IMR-90 (cell line): ENCODE measurements at regions of chr12 and their contacts with region 1.

Region 1: DNA sequence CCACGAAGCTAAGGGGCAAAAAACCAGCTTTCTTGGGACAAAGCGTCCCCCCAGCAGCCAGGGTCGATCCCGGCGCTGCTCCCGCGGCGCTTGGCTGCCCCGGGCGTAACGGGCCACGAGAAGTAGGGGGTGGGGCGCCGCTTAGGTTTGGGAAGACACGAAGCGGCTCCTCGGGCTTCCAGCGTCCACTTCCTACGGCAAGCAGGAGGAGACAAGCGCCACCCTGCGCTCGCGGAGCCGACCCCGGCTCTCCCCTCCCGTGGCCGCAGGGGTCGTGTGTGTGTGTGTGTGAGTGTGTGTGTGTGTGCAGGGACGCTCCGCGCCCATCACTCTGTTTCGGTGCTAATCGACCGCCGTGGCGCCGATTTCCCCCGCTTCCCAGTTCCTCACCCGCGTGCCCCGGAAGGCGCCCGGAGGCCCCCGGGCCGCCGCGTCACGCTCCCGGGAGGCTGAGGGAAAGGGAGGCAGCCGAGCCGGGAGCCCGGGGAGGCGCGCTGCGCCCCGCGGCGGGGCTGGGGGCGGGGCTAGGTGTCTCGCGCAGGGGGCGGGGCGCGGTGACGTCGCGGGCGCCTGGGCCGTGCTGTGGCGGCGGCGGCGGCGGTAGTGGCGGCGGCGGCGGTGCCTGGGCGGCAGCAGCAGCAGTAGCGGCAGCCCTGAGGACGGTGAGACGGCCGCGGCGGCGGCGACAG is at the start of gene ERC1:
- DNase-seq: peak; percentile 87
- ATAC-seq: peak; percentile 91
- H3K4me3 ChIP-seq: peak within 1 kb of the TSS; percentile 77
- H3K27ac ChIP-seq: peak within 1 kb of the TSS; percentile 96
- H3K4me1 ChIP-seq: peaks cover 8% of the 10 kb centered on the region
- H3K27me3 ChIP-seq: no peaks in the 10 kb centered on the region
- CTCF ChIP-seq: 0 out of 2 replicates have a peak, but pooled peaks have one; percentile 1
- POLR2A ChIP-seq: peak; percentile 92
- RAD21 ChIP-seq: no peak
- total RNA-seq, gene ERC1: 25.6 and 27.8 TPM in 2 replicates

Region 2: GRCh38 chr12:896031-896430 is 94.8 kb before region 1 on chr12:
- CTCF ChIA-PET with region 1: no interaction called
- POLR2A ChIA-PET with region 1: no interaction called
- dilution Hi-C with region 1: no loop called
- in situ Hi-C with region 1: no loop called
- intact Hi-C with region 1: no loop called
- DNase-seq: no peak
- ATAC-seq: no peak
- H3K4me3 ChIP-seq: no peak overlapping the region
- H3K27ac ChIP-seq: no peak overlapping the region
- H3K4me1 ChIP-seq: peaks cover 3% of the 10 kb centered on the region; the same call in 1 of the 2 replicates
- H3K27me3 ChIP-seq: no peaks in the 10 kb centered on the region
- CTCF ChIP-seq: no peak
- POLR2A ChIP-seq: no peak
- RAD21 ChIP-seq: no peak

Region 3: GRCh38 chr12:1021886-1022619 is 31.2 kb after region 1 on chr12:
- CTCF ChIA-PET with region 1: no interaction called
- POLR2A ChIA-PET with region 1: no interaction called
- dilution Hi-C with region 1: no loop called
- in situ Hi-C with region 1: no loop called
- intact Hi-C with region 1: no loop called
- DNase-seq: no peak
- ATAC-seq: no peak
- H3K4me3 ChIP-seq: no peak overlapping the region
- H3K27ac ChIP-seq: no peak overlapping the region
- H3K4me1 ChIP-seq: no peaks in the 10 kb centered on the region
- H3K27me3 ChIP-seq: no peaks in the 10 kb centered on the region
- CTCF ChIP-seq: no peak
- POLR2A ChIP-seq: no peak
- RAD21 ChIP-seq: no peak

Region 4: DNA sequence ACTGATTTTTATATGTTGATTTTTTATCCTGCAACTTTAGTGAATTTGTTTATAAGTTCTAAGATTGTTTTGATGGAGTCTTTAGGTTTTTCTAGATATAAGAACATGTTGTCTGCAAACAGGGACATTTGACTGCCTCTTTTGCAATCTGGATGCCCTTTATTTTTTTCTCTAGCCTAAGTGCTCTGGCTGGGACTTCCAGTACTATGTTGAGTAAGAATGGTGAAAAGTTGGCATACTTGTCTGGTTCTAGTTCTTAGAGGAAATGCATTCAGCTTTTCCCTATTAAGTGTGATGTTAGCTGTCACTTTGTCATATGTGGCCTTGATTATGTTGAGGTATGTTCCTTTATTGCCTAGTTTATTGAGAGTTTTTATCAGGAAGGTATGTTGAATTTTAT is 68.4 kb after region 1 on chr12:
- CTCF ChIA-PET with region 1: no interaction called
- POLR2A ChIA-PET with region 1: no interaction called
- dilution Hi-C with region 1: no loop called
- in situ Hi-C with region 1: no loop called
- intact Hi-C with region 1: no loop called
- DNase-seq: no peak
- ATAC-seq: no peak
- H3K4me3 ChIP-seq: no peak overlapping the region
- H3K27ac ChIP-seq: no peak overlapping the region
- H3K4me1 ChIP-seq: peaks cover 3% of the 10 kb centered on the region; the same call in 1 of the 2 replicates
- H3K27me3 ChIP-seq: no peaks in the 10 kb centered on the region
- CTCF ChIP-seq: no peak
- POLR2A ChIP-seq: no peak
- RAD21 ChIP-seq: no peak

Region 5: DNA sequence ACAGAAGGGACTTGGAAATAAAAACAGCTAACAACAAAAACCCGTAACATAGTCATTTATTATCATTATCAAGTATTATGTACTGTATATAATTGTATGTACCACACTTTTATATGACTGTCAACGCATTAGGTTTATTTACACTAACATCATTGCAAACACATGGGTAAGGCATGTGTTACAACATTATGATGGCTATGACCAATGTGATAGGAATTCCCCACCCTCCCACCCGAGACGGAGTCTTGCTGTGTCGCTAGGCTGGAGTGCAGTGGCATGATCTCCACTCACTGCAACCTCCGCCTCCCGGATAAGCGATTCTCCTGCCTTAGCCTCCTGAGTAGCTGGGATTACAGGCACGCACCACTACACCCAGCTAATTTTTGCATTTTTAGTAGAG is 82.8 kb after region 1 on chr12:
- CTCF ChIA-PET with region 1: no interaction called
- POLR2A ChIA-PET with region 1: no interaction called
- dilution Hi-C with region 1: no loop called
- in situ Hi-C with region 1: no loop called
- intact Hi-C with region 1: loop called (anchors 5 kb)
- DNase-seq: no peak
- ATAC-seq: no peak
- H3K4me3 ChIP-seq: no peak overlapping the region
- H3K27ac ChIP-seq: no peak overlapping the region
- H3K4me1 ChIP-seq: peaks cover 3% of the 10 kb centered on the region; the same call in 1 of the 2 replicates
- H3K27me3 ChIP-seq: no peaks in the 10 kb centered on the region
- CTCF ChIP-seq: no peak
- POLR2A ChIP-seq: no peak
- RAD21 ChIP-seq: no peak